ENCODE measurements at regions of chr11 and their contacts with region 1.

Region 1: DNA sequence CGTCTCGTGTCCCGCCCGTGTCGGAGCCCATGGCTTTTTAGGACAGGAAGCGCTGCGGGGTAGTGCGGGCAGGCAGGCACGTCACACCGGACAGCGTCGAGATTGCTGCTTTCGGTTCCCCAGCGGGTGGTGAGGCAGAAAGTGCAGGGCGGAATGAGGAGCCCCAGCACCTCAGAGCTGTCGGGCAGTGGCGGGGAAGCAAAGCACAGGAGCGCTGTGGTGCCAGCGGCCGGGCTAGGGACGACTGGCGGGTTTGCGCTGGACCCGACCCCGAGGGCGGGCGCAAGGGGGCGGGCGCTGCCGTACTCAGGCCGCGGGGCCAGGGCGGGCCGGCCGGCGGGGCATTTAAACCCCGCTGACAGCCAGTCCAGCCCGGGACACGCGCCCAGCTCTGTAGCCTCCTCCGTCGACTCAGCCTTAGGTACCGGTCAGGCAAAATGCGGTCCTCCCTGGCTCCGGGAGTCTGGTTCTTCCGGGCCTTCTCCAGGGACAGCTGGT is at the start of gene SLC37A2:
- DNase-seq: peak; percentile 73
- ATAC-seq: peak; percentile 91
- H3K4me3 ChIP-seq: peak within 1 kb of the TSS; percentile 87
- H3K27ac ChIP-seq: peak within 1 kb of the TSS; percentile 31
- H3K4me1 ChIP-seq: peaks cover 12% of the 10 kb centered on the region; the same call in 1 of the 2 replicates
- H3K27me3 ChIP-seq: no peaks in the 10 kb centered on the region
- CTCF ChIP-seq: peak; percentile 33; the same call in 1 of the 2 replicates
- total RNA-seq, gene SLC37A2: 9.0 and 10.2 TPM in 2 replicates

Region 2: GRCh38 chr11:124961972-124962609 is 100.9 kb before region 1 on chr11:
- CTCF ChIA-PET with region 1: no interaction called
- POLR2A ChIA-PET with region 1: no interaction called
- intact Hi-C with region 1: no loop called
- DNase-seq: peak; percentile 91
- ATAC-seq: peak; percentile 98
- H3K4me3 ChIP-seq: no peak overlapping the region
- H3K27ac ChIP-seq: no peak overlapping the region
- H3K4me1 ChIP-seq: no peaks in the 10 kb centered on the region
- H3K27me3 ChIP-seq: no peaks in the 10 kb centered on the region
- CTCF ChIP-seq: peak; percentile 96

Region 3: GRCh38 chr11:125016413-125016812 is 46.6 kb before region 1 on chr11:
- CTCF ChIA-PET with region 1: no interaction called
- POLR2A ChIA-PET with region 1: interaction called, 18 read pairs
- intact Hi-C with region 1: loop called (anchors 2 kb)
- DNase-seq: no peak
- ATAC-seq: no peak
- H3K4me3 ChIP-seq: no peak overlapping the region
- H3K27ac ChIP-seq: no peak overlapping the region
- H3K4me1 ChIP-seq: peaks cover 11% of the 10 kb centered on the region
- H3K27me3 ChIP-seq: no peaks in the 10 kb centered on the region
- CTCF ChIP-seq: no peak

Region 4: GRCh38 chr11:125022551-125022950 is 40.4 kb before region 1 on chr11:
- CTCF ChIA-PET with region 1: no interaction called
- POLR2A ChIA-PET with region 1: no interaction called
- intact Hi-C with region 1: loop called (anchors 2 kb)
- DNase-seq: no peak
- ATAC-seq: peak; percentile 25; the same call in 1 of the 2 replicates
- H3K4me3 ChIP-seq: no peak overlapping the region
- H3K27ac ChIP-seq: no peak overlapping the region
- H3K4me1 ChIP-seq: peaks cover 11% of the 10 kb centered on the region
- H3K27me3 ChIP-seq: no peaks in the 10 kb centered on the region
- CTCF ChIP-seq: no peak

Region 5: DNA sequence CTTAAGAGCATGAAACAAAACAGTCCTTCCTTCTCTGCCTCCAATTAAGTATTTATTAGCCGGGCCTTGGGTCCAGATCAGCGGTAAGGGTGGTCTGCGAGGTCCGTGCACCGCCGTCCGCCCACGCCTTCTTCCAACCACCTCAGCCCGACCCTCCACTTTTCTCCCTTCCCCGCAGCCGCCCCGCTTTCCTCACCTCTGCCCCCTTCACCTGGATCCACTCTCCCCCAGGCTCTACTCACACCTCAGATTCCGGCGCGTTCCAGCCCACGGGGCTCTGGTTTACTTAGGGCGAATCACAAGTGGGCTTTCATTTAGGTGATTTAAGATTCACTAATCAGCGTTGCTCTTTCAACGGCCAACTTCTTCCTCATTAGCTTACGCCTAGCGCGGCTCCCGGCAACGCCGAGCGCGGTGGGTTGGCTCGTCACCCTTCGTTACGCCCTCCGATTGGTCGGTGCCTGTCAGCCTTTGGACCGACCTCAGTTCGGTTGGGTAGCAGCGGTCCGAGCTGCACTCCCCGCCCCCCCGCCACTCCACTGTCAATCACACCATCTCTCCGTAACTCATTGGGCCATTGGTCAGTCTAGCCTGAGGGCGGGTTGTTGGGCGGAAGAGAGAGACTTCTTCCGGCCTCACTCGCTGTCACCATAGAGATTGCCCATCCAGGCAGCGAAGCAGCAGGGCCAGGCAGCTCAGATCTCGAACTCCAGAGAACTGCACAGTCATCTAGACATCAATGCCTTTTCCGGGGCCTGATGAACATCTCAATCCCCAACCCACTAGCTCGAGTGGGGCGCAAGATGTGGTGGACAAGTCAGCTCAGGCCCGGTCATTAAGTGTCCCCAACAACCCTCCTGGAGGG is 48.6 kb after region 1 on chr11 and contains the start of gene TMEM218:
- CTCF ChIA-PET with region 1: no interaction called
- POLR2A ChIA-PET with region 1: no interaction called
- intact Hi-C with region 1: loop called (anchors 2 kb)
- DNase-seq: peak; percentile 100
- ATAC-seq: peak; percentile 99
- H3K4me3 ChIP-seq: peak within 1 kb of the TSS; percentile 99
- H3K27ac ChIP-seq: peak within 1 kb of the TSS; percentile 8
- H3K4me1 ChIP-seq: peaks cover 7% of the 10 kb centered on the region
- H3K27me3 ChIP-seq: 0 out of 2 replicates have a peak, but pooled peaks cover 1% of the 10 kb centered on the region
- CTCF ChIP-seq: no peak
- total RNA-seq, gene TMEM218: 33.6 and 37.0 TPM in 2 replicates

Measured in PC-3 (cell line).